Activated B cell treated with CpG ODN at 0.5 μM for 24 hours (primary cell): ENCODE measurements at regions of chr11 and their contacts with region 1.

Region 1: GRCh38 chr11:2901854-2902783 is 16.5 kb upstream of the CDKN1C start:
- DNase-seq: peak; percentile 80
- ATAC-seq: peak; percentile 97
- H3K4me3 Mint-ChIP-seq: peak overlapping the region; percentile 80
- H3K27ac Mint-ChIP-seq: peak overlapping the region; percentile 24
- H3K4me1 Mint-ChIP-seq: peaks cover 28% of the 10 kb centered on the region
- H3K27me3 Mint-ChIP-seq: no peaks in the 10 kb centered on the region
- CTCF ChIP-seq: no peak

Region 2: GRCh38 chr11:3378426-3379423 is 476.6 kb after region 1 on chr11 and contains the start of gene ZNF195:
- CTCF ChIA-PET with region 1: no interaction called
- POLR2A ChIA-PET with region 1: no interaction called
- intact Hi-C with region 1: loop called (anchors 1 kb)
- DNase-seq: peak; percentile 95
- ATAC-seq: peak; percentile 99
- H3K4me3 Mint-ChIP-seq: peak within 1 kb of the TSS; percentile 99
- H3K27ac Mint-ChIP-seq: peak within 1 kb of the TSS; percentile 96
- H3K4me1 Mint-ChIP-seq: peaks cover 45% of the 10 kb centered on the region
- H3K27me3 Mint-ChIP-seq: no peaks in the 10 kb centered on the region
- CTCF ChIP-seq: no peak
- total RNA-seq, gene ZNF195: 48.3 and 54.8 TPM in 2 replicates